HepG2 (cell line): ENCODE measurements at regions of chr6 and their contacts with region 1.

Region 1: DNA sequence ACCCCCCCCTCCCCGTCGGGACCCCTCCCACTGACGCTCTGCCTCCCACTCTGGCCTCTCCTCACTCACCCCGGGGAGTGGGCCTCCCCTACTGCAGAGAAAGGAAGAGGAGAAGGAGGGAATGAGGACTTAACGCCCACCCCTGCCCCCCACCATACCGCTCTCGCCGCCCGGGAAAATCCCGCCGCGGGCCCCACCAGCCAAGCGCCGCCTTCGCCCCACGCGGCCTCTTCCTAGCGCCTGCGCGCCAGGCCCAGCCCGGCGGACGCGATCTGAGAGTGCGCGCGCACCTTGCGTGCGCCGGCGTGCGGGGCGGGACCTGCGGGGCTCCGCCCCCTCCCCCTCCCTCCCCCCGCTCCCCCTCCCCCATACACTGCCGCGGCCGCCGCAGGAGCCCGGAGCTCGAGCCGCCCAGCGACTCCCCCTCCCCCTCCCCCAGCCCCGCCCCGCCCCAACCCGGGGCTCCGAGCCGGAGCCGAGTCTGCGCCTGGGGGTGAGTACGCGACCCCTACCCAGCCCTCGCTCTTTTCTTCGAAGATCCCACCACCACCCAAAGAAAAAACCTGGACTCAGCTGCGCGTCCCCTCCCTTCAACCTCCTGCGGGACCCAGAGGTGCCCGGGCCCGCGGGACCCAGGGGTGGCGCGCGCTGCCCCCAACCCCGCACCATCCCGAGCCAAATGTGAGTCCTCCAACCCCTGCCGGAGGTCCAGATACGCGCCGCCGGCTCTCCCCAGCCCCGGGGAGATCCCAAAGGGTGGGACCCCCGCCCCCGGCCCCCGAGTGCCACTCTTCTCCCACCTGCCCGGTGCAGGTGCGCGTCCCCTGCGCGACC is at the starts of genes MRPL14 and TMEM63B:
- DNase-seq: peak; percentile 76
- ATAC-seq: peak; percentile 81
- H3K4me3 ChIP-seq: peak within 1 kb of the TSS; percentile 94 to 95 (median 95)
- H3K27ac ChIP-seq: peak within 1 kb of the TSS; percentile 86
- H3K4me1 ChIP-seq: peaks cover 79% of the 10 kb centered on the region
- H3K27me3 ChIP-seq: no peaks in the 10 kb centered on the region; a peak in 1 of 5 replicates
- CTCF ChIP-seq: no peak
- EP300 ChIP-seq: no peak
- POLR2A ChIP-seq: peak; percentile 77 to 89
- RAD21 ChIP-seq: no peak
- total RNA-seq, gene MRPL14: 178 and 191 TPM in 2 replicates
- total RNA-seq, gene TMEM63B: 13.9 and 27.4 TPM in 2 replicates

Region 2: DNA sequence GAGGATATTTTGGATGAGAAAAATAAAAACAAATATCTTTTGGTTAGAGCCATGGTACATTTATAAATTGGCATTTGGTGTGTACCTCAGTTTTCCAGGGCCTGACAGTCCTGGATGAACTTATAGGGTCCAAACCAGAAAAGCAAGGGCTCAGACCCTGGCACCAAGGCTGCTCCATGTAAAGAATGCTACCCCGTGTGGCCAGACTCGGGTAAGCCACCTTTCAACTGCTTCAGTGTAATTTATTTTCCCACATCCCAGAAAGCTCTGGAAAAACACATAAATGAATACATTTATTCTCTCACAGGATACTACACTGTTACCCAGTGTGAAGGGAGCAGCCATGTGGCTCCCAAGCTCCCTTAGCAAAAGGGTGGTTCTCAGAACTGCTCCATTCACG is 14.0 kb before region 1 on chr6:
- CTCF ChIA-PET with region 1: no interaction called
- POLR2A ChIA-PET with region 1: interaction called, 23 read pairs
- in situ Hi-C with region 1: no loop called
- intact Hi-C with region 1: loop called (anchors 2 kb)
- DNase-seq: no peak
- ATAC-seq: peak; percentile 53
- H3K4me3 ChIP-seq: no peak overlapping the region
- H3K27ac ChIP-seq: peak overlapping the region; percentile 19
- H3K4me1 ChIP-seq: peaks cover 86% of the 10 kb centered on the region
- H3K27me3 ChIP-seq: no peaks in the 10 kb centered on the region
- CTCF ChIP-seq: peak; percentile 32; the same call in 1 of the 2 replicates
- EP300 ChIP-seq: no peak
- POLR2A ChIP-seq: no peak
- RAD21 ChIP-seq: peak; percentile 32; the same call in 1 of the 2 replicates

Region 3: GRCh38 chr6:44151348-44152108 is 24.1 kb after region 1 on chr6:
- CTCF ChIA-PET with region 1: no interaction called
- POLR2A ChIA-PET with region 1: interaction called, 15 read pairs
- in situ Hi-C with region 1: no loop called
- intact Hi-C with region 1: loop called (anchors 1 kb)
- DNase-seq: peak; percentile 39
- ATAC-seq: peak; percentile 60
- H3K4me3 ChIP-seq: no peak overlapping the region
- H3K27ac ChIP-seq: no peak overlapping the region
- H3K4me1 ChIP-seq: peaks cover 30% of the 10 kb centered on the region
- H3K27me3 ChIP-seq: no peaks in the 10 kb centered on the region
- CTCF ChIP-seq: peak; percentile 100
- EP300 ChIP-seq: no peak
- POLR2A ChIP-seq: no peak
- RAD21 ChIP-seq: peak; percentile 99

Region 4: GRCh38 chr6:44156494-44157151 is 29.2 kb after region 1 on chr6:
- CTCF ChIA-PET with region 1: no interaction called
- POLR2A ChIA-PET with region 1: interaction called, 15 read pairs
- in situ Hi-C with region 1: no loop called
- intact Hi-C with region 1: loop called (anchors 1 kb)
- DNase-seq: peak; percentile 97
- ATAC-seq: peak; percentile 92
- H3K4me3 ChIP-seq: peak overlapping the region; percentile 9 to 53 (median 29)
- H3K27ac ChIP-seq: peak overlapping the region; percentile 85
- H3K4me1 ChIP-seq: peaks cover 71% of the 10 kb centered on the region
- H3K27me3 ChIP-seq: no peaks in the 10 kb centered on the region
- CTCF ChIP-seq: no peak; the same call in 1 of the 2 replicates
- EP300 ChIP-seq: peak; percentile 92 to 96
- POLR2A ChIP-seq: no peak; a peak in 2 of 4 replicates
- RAD21 ChIP-seq: peak; percentile 42; the same call in 1 of the 2 replicates